ENCODE measurements at regions of chr15 and their contacts with region 1.

Region 1: GRCh38 chr15:85730001-85730820 is 64.5 kb downstream of the KLHL25 start:
- DNase-seq: peak; percentile 64
- ATAC-seq: peak; percentile 86
- H3K4me3 Mint-ChIP-seq: no peak overlapping the region
- H3K27ac Mint-ChIP-seq: peak overlapping the region; percentile 86
- H3K4me1 Mint-ChIP-seq: peaks cover 15% of the 10 kb centered on the region
- H3K27me3 Mint-ChIP-seq: no peaks in the 10 kb centered on the region
- CTCF ChIP-seq: peak; percentile 83

Region 2: GRCh38 chr15:85718981-85719380 is 11.2 kb before region 1 on chr15:
- CTCF ChIA-PET with region 1: interaction called, 13 read pairs
- POLR2A ChIA-PET with region 1: interaction called, 7 read pairs
- intact Hi-C with region 1: no loop called
- DNase-seq: no peak
- ATAC-seq: no peak
- H3K4me3 Mint-ChIP-seq: no peak overlapping the region
- H3K27ac Mint-ChIP-seq: peak overlapping the region; percentile 64
- H3K4me1 Mint-ChIP-seq: peaks cover 44% of the 10 kb centered on the region
- H3K27me3 Mint-ChIP-seq: no peaks in the 10 kb centered on the region
- CTCF ChIP-seq: no peak

Region 3: GRCh38 chr15:85840065-85840801 is 110.0 kb after region 1 on chr15:
- CTCF ChIA-PET with region 1: interaction called, 52 read pairs
- POLR2A ChIA-PET with region 1: no interaction called
- intact Hi-C with region 1: loop called (anchors 1 kb)
- DNase-seq: peak; percentile 82
- ATAC-seq: peak; percentile 98
- H3K4me3 Mint-ChIP-seq: peak overlapping the region; percentile 52
- H3K27ac Mint-ChIP-seq: no peak overlapping the region
- H3K4me1 Mint-ChIP-seq: no peaks in the 10 kb centered on the region
- H3K27me3 Mint-ChIP-seq: peaks cover 5% of the 10 kb centered on the region
- CTCF ChIP-seq: peak; percentile 80